ENCODE measurements at regions of chr2 and their contacts with region 1.

Region 1: GRCh38 chr2:71117063-71117462 is 13.0 kb downstream of the MCEE start:
- DNase-seq: no peak
- H3K4me3 Mint-ChIP-seq: no peak overlapping the region
- H3K27ac Mint-ChIP-seq: no peak overlapping the region
- H3K4me1 Mint-ChIP-seq: peaks cover 3% of the 10 kb centered on the region
- H3K27me3 Mint-ChIP-seq: no peaks in the 10 kb centered on the region

Region 2: DNA sequence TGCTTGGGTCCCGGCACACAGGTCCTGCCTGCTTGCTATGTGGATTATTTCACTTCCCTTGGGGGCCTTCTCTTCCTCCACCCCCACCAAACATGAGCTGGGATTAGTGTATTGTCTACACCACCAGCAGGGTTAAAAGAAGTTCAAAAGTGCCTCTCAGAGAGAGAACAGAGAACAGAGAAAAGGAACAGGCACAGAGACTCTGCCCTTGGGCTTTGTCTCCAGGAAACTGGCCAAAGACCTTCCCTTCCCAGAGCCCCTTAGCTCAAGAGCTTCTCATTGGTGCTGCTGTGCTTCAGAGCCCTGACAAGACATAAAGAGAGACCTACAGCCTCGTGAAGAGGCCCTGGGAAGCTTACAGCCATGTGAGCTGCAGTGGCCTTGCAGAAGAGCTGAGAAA is 319.6 kb before region 1 on chr2:
- CTCF ChIA-PET with region 1: no interaction called
- intact Hi-C with region 1: no loop called
- DNase-seq: no peak
- H3K4me3 Mint-ChIP-seq: no peak overlapping the region
- H3K27ac Mint-ChIP-seq: no peak overlapping the region
- H3K4me1 Mint-ChIP-seq: no peaks in the 10 kb centered on the region
- H3K27me3 Mint-ChIP-seq: peaks cover 4% of the 10 kb centered on the region

Region 3: DNA sequence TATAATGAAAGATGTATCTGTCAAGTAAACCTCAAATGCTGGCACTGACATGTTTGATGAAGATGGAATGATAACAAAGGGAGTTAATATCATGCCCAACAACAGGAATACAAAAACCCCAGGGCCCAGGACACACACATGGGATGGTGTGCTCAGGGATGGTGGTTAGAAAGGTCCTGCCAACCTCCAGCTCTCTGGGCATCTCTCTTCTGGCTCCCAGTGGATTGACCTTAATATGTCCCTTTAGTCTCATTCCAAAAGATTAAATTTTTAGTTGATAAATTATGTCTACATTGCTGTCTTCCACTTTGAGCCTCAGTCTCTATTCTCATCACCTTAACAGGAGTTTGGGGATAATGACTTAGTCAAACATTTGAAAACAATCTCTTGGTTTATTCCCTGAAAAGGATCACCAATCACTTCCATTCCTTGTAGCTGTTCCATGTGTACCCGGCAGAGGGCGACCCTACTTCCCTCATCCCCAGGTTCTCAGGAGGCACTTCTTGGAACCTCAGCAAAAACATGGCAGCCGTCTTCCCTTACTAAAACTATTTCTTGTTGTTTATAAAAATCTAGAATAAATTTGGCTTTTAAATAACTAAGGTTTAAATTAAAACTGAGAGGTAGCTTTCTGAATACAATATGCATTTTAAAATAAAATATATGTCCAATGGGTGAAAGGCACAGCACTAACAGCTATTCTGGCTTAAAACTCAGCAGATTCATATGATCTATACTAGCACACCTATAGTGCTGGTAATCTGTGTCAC is 16.7 kb before region 1 on chr2:
- CTCF ChIA-PET with region 1: interaction called, 22 read pairs
- intact Hi-C with region 1: no loop called
- DNase-seq: peak; percentile 75
- H3K4me3 Mint-ChIP-seq: no peak overlapping the region
- H3K27ac Mint-ChIP-seq: no peak overlapping the region
- H3K4me1 Mint-ChIP-seq: peaks cover 3% of the 10 kb centered on the region
- H3K27me3 Mint-ChIP-seq: peaks cover 3% of the 10 kb centered on the region

Region 4: GRCh38 chr2:71130113-71130904 is 13.2 kb after region 1 on chr2 and contains the starts of genes MCEE and MPHOSPH10:
- CTCF ChIA-PET with region 1: no interaction called
- intact Hi-C with region 1: loop called (anchors 2 kb)
- DNase-seq: peak; percentile 94
- H3K4me3 Mint-ChIP-seq: no peak within 1 kb of the TSS
- H3K27ac Mint-ChIP-seq: no peak within 1 kb of the TSS
- H3K4me1 Mint-ChIP-seq: peaks cover 16% of the 10 kb centered on the region
- H3K27me3 Mint-ChIP-seq: no peaks in the 10 kb centered on the region
- total RNA-seq, gene MCEE: 14.0 to 15.8 TPM
- total RNA-seq, gene MPHOSPH10: 27.0 to 32.3 TPM

Region 5: DNA sequence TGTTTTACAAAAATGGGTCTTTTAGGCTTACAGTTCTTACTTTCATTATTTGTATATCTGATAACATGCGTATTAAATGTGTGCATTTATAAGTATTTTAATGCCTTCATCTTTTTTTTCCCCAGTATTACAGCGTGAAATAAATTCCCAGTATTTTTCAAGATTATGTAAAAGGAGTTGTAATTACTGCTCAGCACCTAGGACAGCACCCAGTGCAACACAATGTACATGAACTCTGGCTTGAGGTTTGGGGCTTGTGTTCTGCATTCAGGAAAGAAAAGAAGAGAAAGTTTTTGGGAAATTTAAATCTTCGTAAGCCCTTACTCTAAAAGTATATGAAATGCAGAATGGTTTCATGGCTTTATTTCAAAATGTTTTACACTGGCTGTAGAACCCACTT is 231.2 kb after region 1 on chr2:
- CTCF ChIA-PET with region 1: no interaction called
- intact Hi-C with region 1: no loop called
- DNase-seq: peak; percentile 12
- H3K4me3 Mint-ChIP-seq: no peak overlapping the region
- H3K27ac Mint-ChIP-seq: no peak overlapping the region
- H3K4me1 Mint-ChIP-seq: peaks cover 60% of the 10 kb centered on the region
- H3K27me3 Mint-ChIP-seq: no peaks in the 10 kb centered on the region

Region 6: GRCh38 chr2:71631411-71631931 is 514.4 kb after region 1 on chr2:
- CTCF ChIA-PET with region 1: no interaction called
- intact Hi-C with region 1: no loop called
- DNase-seq: no peak
- H3K4me3 Mint-ChIP-seq: no peak overlapping the region
- H3K27ac Mint-ChIP-seq: no peak overlapping the region
- H3K4me1 Mint-ChIP-seq: no peaks in the 10 kb centered on the region
- H3K27me3 Mint-ChIP-seq: peaks cover 11% of the 10 kb centered on the region

Measured in activated naive CD4-positive, alpha-beta T cell treated with anti-CD3 and anti-CD28 coated beads for 36 hours (primary cell).